ENCODE measurements at regions of chr3 and their contacts with region 1.

Region 1: DNA sequence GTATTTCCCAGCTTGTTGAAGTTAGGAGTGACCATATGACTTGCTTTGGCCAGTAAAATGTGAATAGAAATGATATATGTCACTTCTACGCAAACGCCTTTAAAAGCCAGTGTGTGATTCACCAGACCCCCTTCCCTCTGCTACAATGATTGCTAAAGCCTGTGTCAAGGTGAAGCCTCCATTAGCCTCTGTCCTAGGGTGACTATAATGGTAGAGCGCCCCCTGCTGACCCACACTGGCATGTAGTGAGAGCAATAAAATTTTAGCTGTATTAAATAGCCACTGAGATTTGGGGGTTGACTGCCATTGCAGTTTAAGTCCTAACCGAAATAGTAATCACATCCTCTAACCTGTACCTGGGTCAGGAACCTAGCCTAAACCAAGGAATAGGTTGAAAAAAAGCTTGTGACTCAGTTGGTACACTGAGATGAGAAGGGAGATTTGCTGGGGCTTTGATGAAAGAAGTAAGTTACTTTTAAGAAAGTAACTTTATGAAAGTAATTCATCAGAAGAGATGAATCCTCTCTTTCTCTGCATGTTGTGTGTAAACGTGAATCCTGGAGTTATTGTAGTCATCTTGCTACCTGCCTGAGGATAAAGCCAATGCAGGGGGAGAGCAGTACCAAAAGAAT is 52.6 kb downstream of the GTF2E1 start:
- DNase-seq: peak; percentile 70 to 95
- H3K4me3 ChIP-seq: no peak overlapping the region
- H3K27ac ChIP-seq: no peak overlapping the region
- H3K4me1 ChIP-seq: peaks cover 0 to 6% (median 2%) of the 10 kb centered on the region in 4 experiments; a peak in 2 of 7 replicates
- H3K27me3 ChIP-seq: no peaks in the 10 kb centered on the region
- CTCF ChIP-seq: peak; percentile 44 to 87 (median 84)
- EP300 ChIP-seq: no peak
- POLR2A ChIP-seq: no peak
- RAD21 ChIP-seq: peak; percentile 88 to 96

Region 2: DNA sequence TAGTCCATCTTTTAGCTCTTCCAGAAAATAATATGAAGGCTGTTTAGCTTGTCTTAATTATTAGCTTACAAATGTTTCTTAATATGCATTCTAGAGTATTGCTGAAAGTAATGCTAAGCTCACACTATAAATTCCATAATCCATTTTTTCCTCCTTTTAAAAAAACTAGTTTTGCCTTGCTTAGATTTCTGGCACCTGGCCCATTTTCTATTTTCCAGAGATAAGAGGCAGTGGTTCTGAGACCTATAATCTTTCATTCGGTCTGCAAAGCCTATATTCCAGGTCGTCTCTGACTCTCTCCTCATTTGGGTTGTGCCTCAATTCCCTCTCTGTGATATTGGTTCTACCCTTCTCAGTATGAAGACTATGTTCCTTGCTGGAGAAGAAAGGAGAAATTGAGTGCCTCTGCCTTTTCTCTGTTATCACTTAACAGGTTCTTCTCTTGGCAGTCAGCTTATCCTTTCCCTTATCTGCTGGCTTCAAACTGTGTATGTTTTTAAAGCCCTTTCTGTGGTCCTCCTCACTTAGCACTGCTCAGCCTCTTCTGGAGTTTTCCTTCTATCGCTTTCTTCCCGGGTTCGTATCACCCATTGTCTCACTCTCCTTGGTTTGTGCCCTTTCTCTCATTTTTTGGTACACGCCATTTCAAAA is 279.1 kb before region 1 on chr3:
- CTCF ChIA-PET with region 1: no interaction called
- POLR2A ChIA-PET with region 1: no interaction called
- DNase-seq: no peak
- H3K4me3 ChIP-seq: no peak overlapping the region
- H3K27ac ChIP-seq: no peak overlapping the region
- H3K4me1 ChIP-seq: no peaks in the 10 kb centered on the region
- H3K27me3 ChIP-seq: no peaks in the 10 kb centered on the region
- CTCF ChIP-seq: no peak
- EP300 ChIP-seq: no peak
- POLR2A ChIP-seq: no peak
- RAD21 ChIP-seq: no peak

Region 3: GRCh38 chr3:120558771-120559241 is 236.3 kb before region 1 on chr3:
- CTCF ChIA-PET with region 1: interaction called, 31 read pairs
- POLR2A ChIA-PET with region 1: no interaction called
- DNase-seq: peak in 1 of 2 experiments; percentile 92
- H3K4me3 ChIP-seq: peak overlapping the region; percentile 73 to 81 (median 76); a peak in 7 of 8 replicates
- H3K27ac ChIP-seq: no peak overlapping the region
- H3K4me1 ChIP-seq: peaks cover 4 to 13% (median 6%) of the 10 kb centered on the region in 4 experiments; a peak in 6 of 7 replicates
- H3K27me3 ChIP-seq: peaks cover 0 to 3% (median 0%) of the 10 kb centered on the region in 4 experiments; a peak in 2 of 7 replicates
- CTCF ChIP-seq: peak; percentile 83 to 90 (median 86)
- EP300 ChIP-seq: peak in 1 of 2 experiments; percentile 76; a peak in 1 of 3 replicates
- POLR2A ChIP-seq: peak in 1 of 2 experiments; percentile 52; a peak in 2 of 3 replicates
- RAD21 ChIP-seq: peak; percentile 96 to 98

Region 4: DNA sequence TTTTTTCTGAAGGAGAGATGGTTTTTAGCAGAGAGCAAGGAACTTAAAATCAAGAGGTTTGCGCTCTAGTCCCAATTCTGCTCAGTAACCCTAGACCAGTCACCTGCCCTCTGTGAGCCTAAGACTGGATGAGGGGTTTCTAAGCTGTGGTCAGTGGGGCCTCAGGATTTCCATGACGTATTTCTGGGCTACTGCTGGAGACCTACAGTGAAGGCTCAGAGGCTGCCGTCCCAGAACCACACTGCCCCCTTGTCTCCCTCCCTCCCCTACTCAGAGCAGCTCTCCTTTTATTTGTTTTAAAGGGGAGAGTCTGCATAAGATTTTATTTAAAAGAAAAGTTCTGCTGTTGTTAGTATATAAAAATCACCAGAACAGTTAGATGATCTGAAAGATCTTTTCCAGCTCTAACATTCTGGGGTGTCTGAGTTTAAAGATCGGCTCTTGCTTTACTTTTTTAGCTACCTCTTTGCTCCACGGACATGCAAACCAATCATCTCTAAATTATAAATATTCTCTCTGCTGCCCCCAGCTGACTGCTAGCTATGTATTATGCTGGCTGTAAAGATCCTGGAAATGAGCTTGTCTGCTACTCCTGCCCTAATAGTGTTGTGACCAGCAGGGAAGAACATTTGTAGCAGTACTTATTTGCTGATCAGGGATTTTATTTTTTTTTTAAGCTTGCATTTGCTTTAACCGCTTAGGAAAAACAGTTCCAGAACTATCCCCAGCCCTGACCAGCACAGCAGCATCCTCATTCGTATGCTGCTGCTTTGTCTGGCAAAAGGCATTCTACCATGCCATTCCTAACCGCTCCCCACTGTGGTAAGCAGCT is 227.5 kb before region 1 on chr3:
- CTCF ChIA-PET with region 1: interaction called, 24 read pairs
- POLR2A ChIA-PET with region 1: interaction called, 3 read pairs
- DNase-seq: no peak
- H3K4me3 ChIP-seq: peak overlapping the region in 1 of 4 experiments; percentile 28; a peak in 2 of 8 replicates
- H3K27ac ChIP-seq: no peak overlapping the region
- H3K4me1 ChIP-seq: peaks cover 9 to 23% (median 14%) of the 10 kb centered on the region in 4 experiments
- H3K27me3 ChIP-seq: no peaks in the 10 kb centered on the region
- CTCF ChIP-seq: peak in 2 of 3 experiments; percentile 23 to 29; a peak in 2 of 4 replicates
- EP300 ChIP-seq: no peak
- POLR2A ChIP-seq: no peak
- RAD21 ChIP-seq: no peak; a peak in 1 of 4 replicates

Region 5: DNA sequence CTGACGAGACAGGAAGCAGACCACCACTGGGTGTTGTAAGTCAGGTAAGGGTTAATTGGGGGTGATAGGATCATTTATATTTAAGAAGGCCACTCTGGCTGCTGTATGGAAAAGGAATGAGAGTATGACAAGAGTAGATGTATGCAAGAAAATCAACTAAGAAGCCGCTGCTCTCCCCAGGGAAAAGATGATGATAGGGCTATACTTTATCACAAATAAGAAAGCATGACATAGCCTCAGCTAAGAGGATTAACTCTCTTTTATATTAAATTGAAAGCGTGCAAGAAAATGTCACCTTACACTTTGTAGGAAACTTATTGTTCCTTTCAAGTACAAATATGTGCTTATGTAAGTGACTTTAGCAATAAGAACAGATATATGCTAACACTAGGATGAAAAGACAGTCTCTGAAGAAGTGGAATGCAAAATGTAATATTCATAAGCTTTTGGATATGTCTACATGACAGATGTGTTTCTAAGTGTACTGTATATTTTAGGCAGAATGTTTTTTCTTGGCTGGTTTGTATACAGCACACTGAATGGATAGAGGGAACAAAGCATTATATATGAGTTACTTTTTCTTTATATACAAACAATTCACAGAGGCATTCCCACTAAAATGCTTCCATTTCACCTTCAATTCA is 207.7 kb before region 1 on chr3:
- CTCF ChIA-PET with region 1: no interaction called
- POLR2A ChIA-PET with region 1: no interaction called
- DNase-seq: no peak
- H3K4me3 ChIP-seq: no peak overlapping the region
- H3K27ac ChIP-seq: no peak overlapping the region
- H3K4me1 ChIP-seq: no peaks in the 10 kb centered on the region
- H3K27me3 ChIP-seq: no peaks in the 10 kb centered on the region
- CTCF ChIP-seq: no peak
- EP300 ChIP-seq: no peak
- POLR2A ChIP-seq: no peak
- RAD21 ChIP-seq: no peak

Region 6: DNA sequence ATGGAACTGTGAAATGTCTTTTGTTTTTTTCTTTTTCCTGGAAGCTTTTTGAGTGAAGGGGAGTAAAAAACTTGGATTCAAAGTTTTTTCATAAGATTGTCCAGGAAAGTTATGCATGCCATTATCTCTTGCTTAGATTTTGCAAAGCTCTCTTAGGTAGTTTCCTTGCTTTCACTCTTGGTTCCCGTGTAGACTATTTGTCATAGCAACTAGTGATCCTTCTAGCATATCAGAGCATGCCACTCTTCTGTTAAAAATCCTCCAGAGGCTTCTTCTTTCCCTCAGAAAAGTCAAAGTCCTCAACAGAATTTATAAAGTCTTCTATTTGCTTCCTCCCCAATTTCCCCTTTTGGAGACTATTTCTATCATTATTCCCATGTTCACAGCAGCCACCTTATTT is 31.5 kb before region 1 on chr3:
- CTCF ChIA-PET with region 1: interaction called, 17 read pairs
- POLR2A ChIA-PET with region 1: no interaction called
- DNase-seq: no peak
- H3K4me3 ChIP-seq: no peak overlapping the region
- H3K27ac ChIP-seq: no peak overlapping the region
- H3K4me1 ChIP-seq: peaks cover 0 to 4% (median 2%) of the 10 kb centered on the region in 4 experiments; a peak in 3 of 7 replicates
- H3K27me3 ChIP-seq: no peaks in the 10 kb centered on the region
- CTCF ChIP-seq: no peak
- EP300 ChIP-seq: no peak
- POLR2A ChIP-seq: no peak
- RAD21 ChIP-seq: no peak

Region 7: GRCh38 chr3:120841264-120841663 is 46.1 kb after region 1 on chr3:
- CTCF ChIA-PET with region 1: no interaction called
- POLR2A ChIA-PET with region 1: no interaction called
- DNase-seq: no peak
- H3K4me3 ChIP-seq: no peak overlapping the region
- H3K27ac ChIP-seq: no peak overlapping the region
- H3K4me1 ChIP-seq: peaks cover 0 to 5% (median 1%) of the 10 kb centered on the region in 4 experiments; a peak in 2 of 7 replicates
- H3K27me3 ChIP-seq: no peaks in the 10 kb centered on the region
- CTCF ChIP-seq: no peak
- EP300 ChIP-seq: no peak
- POLR2A ChIP-seq: no peak
- RAD21 ChIP-seq: no peak

Region 8: DNA sequence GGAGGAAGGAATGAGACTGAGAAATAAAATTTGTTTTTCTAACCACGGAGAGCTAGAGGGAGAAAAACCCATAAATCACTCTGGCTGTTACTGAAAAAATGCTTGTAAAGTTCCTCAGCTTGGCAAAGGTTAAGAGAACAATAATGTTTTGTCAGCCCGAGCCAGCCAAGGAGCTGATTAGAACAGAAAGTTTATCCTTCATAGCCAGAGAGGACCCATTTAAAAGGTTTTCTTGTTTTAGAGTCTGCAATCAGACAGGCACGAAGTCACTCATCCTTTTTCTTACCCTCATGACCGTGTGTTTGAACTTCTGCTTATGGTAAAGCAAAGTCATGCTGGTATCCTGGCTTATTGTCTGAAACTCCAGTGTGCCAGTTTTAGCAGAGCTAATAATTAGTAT is 99.2 kb after region 1 on chr3:
- CTCF ChIA-PET with region 1: no interaction called
- POLR2A ChIA-PET with region 1: no interaction called
- DNase-seq: no peak
- H3K4me3 ChIP-seq: no peak overlapping the region
- H3K27ac ChIP-seq: no peak overlapping the region
- H3K4me1 ChIP-seq: no peaks in the 10 kb centered on the region
- H3K27me3 ChIP-seq: no peaks in the 10 kb centered on the region
- CTCF ChIP-seq: no peak
- EP300 ChIP-seq: no peak
- POLR2A ChIP-seq: no peak
- RAD21 ChIP-seq: no peak

Measured in H1 (cell line).